Activated CD8-positive, alpha-beta T cell treated with anti-CD3 and anti-CD28 coated beads for 36 hours (primary cell): ENCODE measurements at regions of chr10 and their contacts with region 1.

Region 1: DNA sequence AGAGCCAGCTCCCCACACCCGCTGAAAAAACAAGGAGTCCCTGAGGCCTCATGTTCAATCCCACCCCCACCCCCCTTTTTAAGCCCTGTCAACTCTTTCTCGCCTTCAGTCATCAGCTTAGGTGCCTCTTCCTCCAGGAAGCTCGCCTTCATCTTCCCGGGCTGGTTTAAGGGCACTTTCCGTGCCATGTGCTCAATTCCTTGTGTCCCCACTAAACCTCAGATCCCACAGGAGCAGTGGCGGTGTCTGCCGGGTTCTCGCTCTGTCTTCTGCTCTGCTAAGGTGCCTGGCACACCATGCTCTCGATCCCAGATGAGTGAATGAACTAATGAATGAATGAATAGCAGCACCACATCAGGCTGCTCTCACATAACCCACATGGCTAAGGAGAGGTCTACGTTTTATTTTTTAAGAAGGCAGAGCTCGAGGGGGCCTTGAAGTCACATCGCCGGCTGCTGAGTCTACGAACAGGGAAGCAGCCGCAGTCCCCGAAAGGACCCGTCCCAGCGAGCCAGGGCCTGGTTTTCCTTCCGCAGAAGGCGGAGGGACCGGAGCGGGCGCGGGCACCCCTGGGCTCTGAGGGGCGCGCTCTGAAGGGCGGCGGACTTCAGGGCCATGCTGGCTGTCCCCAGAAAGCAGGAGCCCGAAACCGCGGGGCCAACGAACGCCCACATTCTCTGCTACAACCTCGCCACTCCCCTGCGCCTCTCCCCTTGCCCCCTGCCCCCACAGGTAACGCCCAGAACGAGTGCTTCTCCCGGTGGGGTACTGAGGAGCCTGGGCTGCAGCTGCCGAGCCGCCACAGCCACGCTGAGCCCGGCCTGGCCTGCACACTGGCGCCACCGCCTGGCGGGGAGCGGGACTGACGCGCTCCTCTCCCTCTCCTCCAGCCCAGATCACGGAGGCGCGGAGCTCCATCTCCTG is 73.4 kb upstream of the KCNMA1 start:
- DNase-seq: peak; percentile 79
- ATAC-seq: peak; percentile 97
- H3K4me3 Mint-ChIP-seq: peak overlapping the region; percentile 53
- H3K27ac Mint-ChIP-seq: no peak overlapping the region
- H3K4me1 Mint-ChIP-seq: peaks cover 5% of the 10 kb centered on the region
- H3K27me3 Mint-ChIP-seq: peaks cover 25% of the 10 kb centered on the region
- CTCF ChIP-seq: peak; percentile 93

Region 2: GRCh38 chr10:77173615-77174461 is 537.2 kb before region 1 on chr10:
- CTCF ChIA-PET with region 1: interaction called, 17 read pairs
- POLR2A ChIA-PET with region 1: no interaction called
- intact Hi-C with region 1: loop called (anchors 5 kb)
- DNase-seq: peak; percentile 84
- ATAC-seq: peak; percentile 66
- H3K4me3 Mint-ChIP-seq: no peak overlapping the region
- H3K27ac Mint-ChIP-seq: no peak overlapping the region
- H3K4me1 Mint-ChIP-seq: no peaks in the 10 kb centered on the region
- H3K27me3 Mint-ChIP-seq: peaks cover 1% of the 10 kb centered on the region
- CTCF ChIP-seq: peak; percentile 87

Region 3: DNA sequence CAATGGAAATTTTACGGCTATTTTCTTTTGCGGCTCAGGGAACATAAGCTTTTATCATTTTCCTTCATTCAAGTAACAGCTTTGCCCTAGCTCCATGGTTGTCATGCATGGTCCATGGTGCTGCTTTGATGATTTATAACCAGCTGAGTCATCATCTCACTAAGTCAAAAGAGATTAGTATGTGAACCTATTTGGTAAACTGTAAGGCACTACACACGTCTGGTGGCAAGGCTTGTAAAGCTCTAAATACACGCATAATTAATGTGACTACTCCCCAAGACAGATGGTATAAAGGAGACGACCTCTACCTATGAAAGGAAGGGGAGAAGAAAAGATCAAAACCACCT is 413.7 kb before region 1 on chr10:
- CTCF ChIA-PET with region 1: no interaction called
- POLR2A ChIA-PET with region 1: no interaction called
- intact Hi-C with region 1: no loop called
- DNase-seq: no peak
- ATAC-seq: no peak
- H3K4me3 Mint-ChIP-seq: no peak overlapping the region
- H3K27ac Mint-ChIP-seq: no peak overlapping the region
- H3K4me1 Mint-ChIP-seq: no peaks in the 10 kb centered on the region
- H3K27me3 Mint-ChIP-seq: peaks cover 5% of the 10 kb centered on the region
- CTCF ChIP-seq: no peak

Region 4: GRCh38 chr10:77467422-77467963 is 243.5 kb before region 1 on chr10:
- CTCF ChIA-PET with region 1: no interaction called
- POLR2A ChIA-PET with region 1: no interaction called
- intact Hi-C with region 1: no loop called
- DNase-seq: no peak
- ATAC-seq: no peak
- H3K4me3 Mint-ChIP-seq: no peak overlapping the region
- H3K27ac Mint-ChIP-seq: no peak overlapping the region
- H3K4me1 Mint-ChIP-seq: no peaks in the 10 kb centered on the region
- H3K27me3 Mint-ChIP-seq: no peaks in the 10 kb centered on the region
- CTCF ChIP-seq: no peak

Region 5: DNA sequence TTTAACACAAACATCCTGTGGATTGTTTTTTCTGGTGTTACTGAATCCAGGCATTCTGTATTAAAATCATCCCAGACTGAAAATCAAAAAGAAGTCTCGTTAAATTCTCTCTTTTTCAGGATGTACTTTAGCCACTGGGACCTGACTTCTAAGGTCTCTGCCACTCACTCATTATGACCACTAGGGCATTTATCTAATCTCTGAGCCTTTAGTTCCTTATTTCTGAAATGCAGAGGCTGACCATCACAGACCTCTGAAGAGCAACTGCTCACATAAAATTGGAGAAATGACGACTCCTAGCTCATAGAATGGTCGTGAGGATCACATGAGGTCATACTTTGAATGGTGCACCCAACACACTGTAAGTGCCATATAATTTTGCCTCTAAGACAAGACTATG is 136.6 kb before region 1 on chr10:
- CTCF ChIA-PET with region 1: no interaction called
- POLR2A ChIA-PET with region 1: no interaction called
- intact Hi-C with region 1: no loop called
- DNase-seq: no peak
- ATAC-seq: no peak
- H3K4me3 Mint-ChIP-seq: no peak overlapping the region
- H3K27ac Mint-ChIP-seq: no peak overlapping the region
- H3K4me1 Mint-ChIP-seq: no peaks in the 10 kb centered on the region
- H3K27me3 Mint-ChIP-seq: no peaks in the 10 kb centered on the region
- CTCF ChIP-seq: no peak

Region 6: GRCh38 chr10:77667426-77668324 is 43.3 kb before region 1 on chr10:
- CTCF ChIA-PET with region 1: interaction called, 13 read pairs
- POLR2A ChIA-PET with region 1: no interaction called
- intact Hi-C with region 1: no loop called
- DNase-seq: no peak
- ATAC-seq: no peak
- H3K4me3 Mint-ChIP-seq: no peak overlapping the region
- H3K27ac Mint-ChIP-seq: no peak overlapping the region
- H3K4me1 Mint-ChIP-seq: no peaks in the 10 kb centered on the region
- H3K27me3 Mint-ChIP-seq: peaks cover 26% of the 10 kb centered on the region
- CTCF ChIP-seq: no peak

Region 7: GRCh38 chr10:77692782-77693181 is 18.2 kb before region 1 on chr10:
- CTCF ChIA-PET with region 1: interaction called, 38 read pairs
- POLR2A ChIA-PET with region 1: interaction called, 3 read pairs
- intact Hi-C with region 1: no loop called
- DNase-seq: no peak
- ATAC-seq: no peak
- H3K4me3 Mint-ChIP-seq: no peak overlapping the region
- H3K27ac Mint-ChIP-seq: no peak overlapping the region
- H3K4me1 Mint-ChIP-seq: no peaks in the 10 kb centered on the region
- H3K27me3 Mint-ChIP-seq: peaks cover 14% of the 10 kb centered on the region
- CTCF ChIP-seq: no peak

Region 8: DNA sequence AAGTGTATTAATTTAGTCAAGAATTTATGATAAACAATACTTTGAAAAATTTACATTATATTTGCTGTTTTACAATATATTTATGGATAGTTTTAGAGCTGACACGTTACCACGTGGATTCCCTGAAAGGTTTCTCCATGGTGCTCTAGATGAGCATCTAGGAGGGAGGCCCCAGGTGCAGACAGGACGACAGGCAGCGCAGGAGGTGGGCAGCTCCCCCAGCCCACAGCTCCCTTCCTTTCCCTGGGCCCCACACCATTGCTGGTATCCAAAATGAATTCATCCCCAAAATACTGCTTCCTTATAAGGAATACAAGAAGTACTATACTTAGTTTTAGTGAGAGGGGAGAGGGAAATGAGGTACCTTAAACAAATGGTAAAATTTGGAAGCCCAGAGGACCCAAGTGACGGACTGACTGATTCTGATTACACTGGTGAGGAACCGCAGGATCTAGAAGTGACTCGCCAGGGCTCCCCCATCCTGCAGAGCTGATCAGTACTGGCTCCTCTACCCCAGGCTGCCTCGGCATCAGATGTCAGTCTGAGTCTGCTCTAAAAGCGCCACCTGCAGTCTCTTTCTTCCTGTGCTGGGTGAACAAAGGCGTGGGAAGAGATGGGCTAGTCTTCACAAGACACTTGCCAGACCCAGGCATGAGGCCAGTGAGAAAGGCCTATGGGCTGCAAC is 126.4 kb after region 1 on chr10:
- CTCF ChIA-PET with region 1: interaction called, 24 read pairs
- POLR2A ChIA-PET with region 1: no interaction called
- intact Hi-C with region 1: loop called (anchors 5 kb)
- DNase-seq: peak; percentile 89
- ATAC-seq: peak; percentile 91
- H3K4me3 Mint-ChIP-seq: no peak overlapping the region
- H3K27ac Mint-ChIP-seq: no peak overlapping the region
- H3K4me1 Mint-ChIP-seq: peaks cover 6% of the 10 kb centered on the region
- H3K27me3 Mint-ChIP-seq: no peaks in the 10 kb centered on the region
- CTCF ChIP-seq: peak; percentile 33

Region 9: DNA sequence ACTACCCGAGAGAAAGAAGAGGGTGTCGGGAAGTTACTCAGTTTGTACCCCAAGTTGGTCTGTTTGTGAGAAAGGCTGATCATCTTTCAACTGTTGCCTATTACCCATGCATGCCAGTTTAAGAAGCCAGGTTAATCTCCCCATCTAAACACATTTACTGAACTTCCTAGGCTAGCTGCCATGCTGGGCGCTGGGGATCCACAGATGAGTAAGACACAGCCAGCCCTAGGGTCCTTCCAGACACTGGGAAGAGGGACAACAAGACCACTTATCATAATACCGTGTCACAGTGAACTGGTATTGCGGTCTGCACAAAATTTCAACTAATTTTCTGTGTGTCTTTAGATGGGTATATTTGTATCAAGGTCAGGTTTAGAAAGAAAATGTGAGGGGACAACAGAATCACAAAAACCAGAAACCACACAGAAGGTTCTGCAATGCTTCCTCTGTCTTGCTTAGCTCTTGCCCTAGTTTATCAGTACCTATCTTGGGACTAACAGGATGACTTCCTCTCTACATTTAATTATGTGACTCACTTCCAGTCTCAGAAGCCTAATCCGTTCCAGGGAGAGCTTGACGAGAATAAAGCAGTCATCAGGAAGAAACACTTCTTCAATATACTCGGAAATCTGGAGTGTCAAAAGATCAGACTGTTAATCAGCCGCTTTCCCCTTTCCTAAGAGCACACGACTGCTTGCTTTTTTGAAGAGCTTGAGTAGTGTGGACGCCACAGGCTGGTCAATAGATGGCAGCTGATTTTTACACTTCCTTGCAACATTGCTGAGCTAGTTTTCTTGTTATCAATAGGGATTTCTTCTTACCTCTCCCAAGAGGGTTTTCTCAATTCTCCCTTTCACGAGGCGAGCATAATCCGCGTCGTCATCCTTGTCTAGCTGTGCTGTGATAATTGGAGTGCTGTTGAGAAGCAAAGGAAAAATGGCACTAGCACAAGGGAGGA is 272.6 kb after region 1 on chr10:
- CTCF ChIA-PET with region 1: no interaction called
- POLR2A ChIA-PET with region 1: no interaction called
- intact Hi-C with region 1: no loop called
- DNase-seq: no peak
- ATAC-seq: no peak
- H3K4me3 Mint-ChIP-seq: no peak overlapping the region
- H3K27ac Mint-ChIP-seq: no peak overlapping the region
- H3K4me1 Mint-ChIP-seq: no peaks in the 10 kb centered on the region
- H3K27me3 Mint-ChIP-seq: no peaks in the 10 kb centered on the region
- CTCF ChIP-seq: no peak